Panc1 (cell line): ENCODE measurements at regions of chr12 and their contacts with region 1.

Region 1: GRCh38 chr12:120200364-120200800 is 529 bp downstream of the RPLP0 start:
- DNase-seq: no peak
- ATAC-seq: no peak
- H3K4me3 ChIP-seq: peak overlapping the region; percentile 76 to 88
- H3K27ac ChIP-seq: peak overlapping the region; percentile 98
- H3K4me1 ChIP-seq: peaks cover 27% of the 10 kb centered on the region
- H3K27me3 ChIP-seq: no peaks in the 10 kb centered on the region
- CTCF ChIP-seq: no peak

Region 2: GRCh38 chr12:120265473-120266179 is 65.2 kb after region 1 on chr12 and contains the start of gene PXN:
- CTCF ChIA-PET with region 1: no interaction called
- POLR2A ChIA-PET with region 1: interaction called, 20 read pairs
- in situ Hi-C with region 1: no loop called
- intact Hi-C with region 1: no loop called
- DNase-seq: no peak
- ATAC-seq: peak; percentile 84
- H3K4me3 ChIP-seq: peak within 1 kb of the TSS; percentile 87 to 92
- H3K27ac ChIP-seq: peak within 1 kb of the TSS; percentile 100
- H3K4me1 ChIP-seq: peaks cover 34% of the 10 kb centered on the region
- H3K27me3 ChIP-seq: no peaks in the 10 kb centered on the region
- CTCF ChIP-seq: peak; percentile 93
- total RNA-seq, gene PXN: 484 TPM